K562 (cell line): ENCODE measurements at regions of chr15 and their contacts with region 1.

Region 1: DNA sequence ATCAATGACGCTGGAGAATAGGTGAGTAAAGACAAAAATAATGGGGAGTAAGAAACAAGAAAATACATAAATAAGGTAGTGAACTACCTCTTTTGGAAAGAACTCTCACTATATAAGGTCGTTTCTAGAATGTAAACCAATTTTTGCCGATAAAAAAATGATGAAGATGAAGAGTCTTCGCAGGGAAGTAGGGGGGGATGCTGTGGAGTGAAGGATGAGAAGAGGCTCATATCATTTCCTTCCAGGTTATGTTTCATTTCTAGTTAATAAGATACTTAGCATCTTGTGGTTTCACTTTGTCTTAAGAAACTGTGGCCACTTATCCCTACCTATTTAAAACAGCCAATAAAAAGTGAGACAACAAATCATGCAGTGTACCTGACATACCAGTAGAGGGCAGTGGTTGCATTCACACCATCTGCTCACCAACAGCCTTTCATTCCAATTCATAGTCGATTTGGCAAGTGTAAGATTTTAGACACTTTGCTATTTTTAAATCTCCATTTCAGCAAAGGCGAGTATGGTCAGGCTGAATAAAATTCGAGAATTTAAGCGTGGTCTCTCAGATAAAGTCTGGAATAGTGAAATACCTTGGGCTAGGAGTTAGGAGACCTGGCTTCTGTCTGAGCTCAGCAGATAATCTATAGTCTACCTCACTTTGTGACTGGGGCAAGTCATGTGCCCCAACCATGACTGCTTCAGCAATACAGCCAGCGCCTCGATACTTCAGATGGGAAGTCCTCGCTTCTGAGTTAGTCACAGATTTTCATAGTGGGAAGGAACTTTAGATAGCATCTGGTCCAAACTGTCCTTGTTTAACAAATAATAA is 28.9 kb upstream of the ICE2 start:
- DNase-seq: peak; percentile 55 to 68 (median 62)
- ATAC-seq: peak; percentile 88
- H3K4me3 ChIP-seq: no peak overlapping the region
- H3K27ac ChIP-seq: no peak overlapping the region
- H3K4me1 ChIP-seq: no peaks in the 10 kb centered on the region
- H3K27me3 ChIP-seq: peaks cover 18 to 21% of the 10 kb centered on the region in 2 experiments
- CTCF ChIP-seq: peak; percentile 65 to 92 (median 89)
- EP300 ChIP-seq: no peak
- POLR2A ChIP-seq: no peak
- RAD21 ChIP-seq: peak; percentile 46 to 69

Region 2: DNA sequence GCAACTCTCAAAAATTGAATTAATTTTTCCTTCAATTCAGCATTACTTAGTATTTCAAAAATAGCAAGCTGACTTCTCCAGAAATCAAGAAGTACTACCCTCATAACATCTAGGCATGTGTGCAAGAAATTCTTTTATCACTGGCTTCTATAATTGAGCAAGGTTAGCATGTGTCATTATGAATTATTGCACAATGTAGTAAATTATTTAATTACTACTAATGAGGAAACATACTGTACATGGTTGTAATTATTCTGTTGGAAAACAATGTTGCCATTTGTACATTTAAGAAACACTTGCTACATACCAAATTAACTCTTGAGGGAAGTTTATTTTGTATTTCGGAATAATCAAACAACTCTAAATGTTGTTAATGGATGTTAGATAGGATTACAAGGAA is 93.3 kb after region 1 on chr15:
- CTCF ChIA-PET with region 1: no interaction called
- POLR2A ChIA-PET with region 1: no interaction called
- in situ Hi-C with region 1: no loop called
- intact Hi-C with region 1: no loop called
- DNase-seq: no peak
- ATAC-seq: no peak
- H3K4me3 ChIP-seq: no peak overlapping the region
- H3K27ac ChIP-seq: no peak overlapping the region
- H3K4me1 ChIP-seq: no peaks in the 10 kb centered on the region
- H3K27me3 ChIP-seq: peaks cover 3 to 4% of the 10 kb centered on the region in 2 experiments; a peak in 4 of 5 replicates
- CTCF ChIP-seq: no peak
- EP300 ChIP-seq: no peak
- POLR2A ChIP-seq: no peak
- RAD21 ChIP-seq: no peak

Region 3: GRCh38 chr15:60916679-60917460 is 409.1 kb after region 1 on chr15:
- CTCF ChIA-PET with region 1: interaction called, 9 read pairs
- POLR2A ChIA-PET with region 1: no interaction called
- in situ Hi-C with region 1: no loop called
- intact Hi-C with region 1: loop called (anchors 10 kb)
- DNase-seq: peak; percentile 37 to 69 (median 60)
- ATAC-seq: peak; percentile 89
- H3K4me3 ChIP-seq: no peak overlapping the region
- H3K27ac ChIP-seq: no peak overlapping the region
- H3K4me1 ChIP-seq: no peaks in the 10 kb centered on the region
- H3K27me3 ChIP-seq: no peaks in the 10 kb centered on the region
- CTCF ChIP-seq: peak; percentile 66 to 73 (median 71)
- EP300 ChIP-seq: no peak
- POLR2A ChIP-seq: no peak
- RAD21 ChIP-seq: peak; percentile 56 to 67

Region 4: DNA sequence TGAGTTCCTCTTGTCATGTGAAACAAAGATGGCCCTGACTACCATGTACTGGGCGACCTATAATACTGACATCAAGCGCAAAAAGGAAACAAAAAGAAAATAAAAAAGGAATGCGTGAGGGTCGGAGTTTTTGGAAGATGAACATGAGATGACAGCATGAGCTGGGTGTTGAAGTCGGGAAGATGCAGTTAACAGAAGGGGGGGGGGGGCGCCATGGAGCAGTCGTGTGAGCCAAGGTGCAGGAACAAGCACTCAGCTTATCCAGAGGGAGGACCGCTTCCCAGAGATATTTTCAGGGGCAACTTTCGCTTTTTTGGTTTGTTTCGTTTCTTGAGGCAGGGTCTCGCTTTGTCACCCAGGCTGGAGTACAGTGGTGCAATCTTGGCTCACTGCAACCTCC is 611.1 kb after region 1 on chr15:
- CTCF ChIA-PET with region 1: no interaction called
- POLR2A ChIA-PET with region 1: no interaction called
- in situ Hi-C with region 1: no loop called
- intact Hi-C with region 1: no loop called
- DNase-seq: peak; percentile 11 to 45 (median 44)
- ATAC-seq: 0 out of 3 replicates have a peak, but pooled peaks have one; percentile 57
- H3K4me3 ChIP-seq: no peak overlapping the region
- H3K27ac ChIP-seq: no peak overlapping the region
- H3K4me1 ChIP-seq: no peaks in the 10 kb centered on the region
- H3K27me3 ChIP-seq: peaks cover 0 to 10% of the 10 kb centered on the region in 2 experiments; a peak in 2 of 5 replicates
- CTCF ChIP-seq: peak; percentile 35 to 48 (median 40); a peak in 5 of 6 replicates
- EP300 ChIP-seq: no peak
- POLR2A ChIP-seq: no peak
- RAD21 ChIP-seq: no peak

Region 5: GRCh38 chr15:61759639-61760038 is 1251.8 kb after region 1 on chr15:
- CTCF ChIA-PET with region 1: no interaction called
- POLR2A ChIA-PET with region 1: no interaction called
- in situ Hi-C with region 1: no loop called
- intact Hi-C with region 1: no loop called
- DNase-seq: no peak
- ATAC-seq: no peak
- H3K4me3 ChIP-seq: no peak overlapping the region
- H3K27ac ChIP-seq: no peak overlapping the region
- H3K4me1 ChIP-seq: no peaks in the 10 kb centered on the region
- H3K27me3 ChIP-seq: peaks cover 0 to 2% of the 10 kb centered on the region in 2 experiments; a peak in 3 of 5 replicates
- CTCF ChIP-seq: no peak
- EP300 ChIP-seq: no peak
- POLR2A ChIP-seq: no peak
- RAD21 ChIP-seq: no peak